ENCODE measurements at regions of chr14 and their contacts with region 1.

Region 1: GRCh38 chr14:22380571-22381407 is 208.2 kb downstream of the DAD1 start:
- DNase-seq: no peak
- H3K4me3 ChIP-seq: peak overlapping the region in 1 of 2 donors; percentile 18
- H3K27ac ChIP-seq: peak overlapping the region; percentile 72 to 84
- H3K4me1 ChIP-seq: peaks cover 4 to 12% of the 10 kb centered on the region in 2 donors
- H3K27me3 ChIP-seq: no peaks in the 10 kb centered on the region
- CTCF ChIP-seq: no peak

Region 2: DNA sequence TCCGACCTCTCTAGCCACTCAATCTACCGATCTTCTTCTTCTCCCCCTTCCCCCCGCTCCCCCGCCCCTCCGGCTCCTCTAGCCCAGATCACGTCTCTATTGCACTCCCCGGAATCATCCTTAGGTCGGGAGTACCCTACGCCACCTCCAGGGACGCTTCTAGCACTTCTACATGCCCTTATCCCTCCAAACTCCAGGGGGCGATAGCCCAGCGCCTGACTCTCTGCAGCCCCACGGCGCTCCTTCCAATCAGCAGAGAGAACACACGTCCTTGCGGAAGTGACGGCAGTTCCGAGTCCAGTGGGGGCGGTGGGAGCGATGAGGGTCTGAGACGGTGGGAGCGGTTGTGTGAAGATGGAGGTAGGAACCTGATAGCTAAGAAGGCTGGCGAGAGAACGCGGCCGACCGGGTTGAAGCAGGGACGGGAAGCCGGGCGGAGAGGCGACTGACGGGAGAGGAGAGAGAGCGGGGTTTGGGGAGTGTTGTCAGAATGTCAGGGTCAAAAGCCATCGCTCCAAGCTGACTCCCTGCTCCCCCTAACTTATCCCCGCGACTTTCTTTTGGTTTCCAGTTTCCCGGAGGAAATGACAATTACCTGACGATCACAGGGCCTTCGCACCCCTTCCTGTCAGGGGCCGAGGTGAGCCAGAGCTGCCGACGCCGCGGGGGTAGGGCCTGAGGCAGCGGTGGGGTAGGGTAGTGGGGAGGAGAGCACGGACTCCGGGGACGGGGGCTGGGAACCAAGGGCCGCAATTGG is 903.7 kb before region 1 on chr14 and contains the starts of genes RAB2B and TOX4:
- intact Hi-C with region 1: no loop called
- DNase-seq: peak; percentile 90 to 99
- H3K4me3 ChIP-seq: peak within 1 kb of the TSS; percentile 80 to 86
- H3K27ac ChIP-seq: peak within 1 kb of the TSS; percentile 85 to 90
- H3K4me1 ChIP-seq: peaks cover 4 to 16% of the 10 kb centered on the region in 2 donors
- H3K27me3 ChIP-seq: no peaks in the 10 kb centered on the region
- CTCF ChIP-seq: peak; percentile 97 to 98 (median 98)
- total RNA-seq, gene RAB2B: 19.2 TPM
- total RNA-seq, gene TOX4: 76.7 TPM

Region 3: DNA sequence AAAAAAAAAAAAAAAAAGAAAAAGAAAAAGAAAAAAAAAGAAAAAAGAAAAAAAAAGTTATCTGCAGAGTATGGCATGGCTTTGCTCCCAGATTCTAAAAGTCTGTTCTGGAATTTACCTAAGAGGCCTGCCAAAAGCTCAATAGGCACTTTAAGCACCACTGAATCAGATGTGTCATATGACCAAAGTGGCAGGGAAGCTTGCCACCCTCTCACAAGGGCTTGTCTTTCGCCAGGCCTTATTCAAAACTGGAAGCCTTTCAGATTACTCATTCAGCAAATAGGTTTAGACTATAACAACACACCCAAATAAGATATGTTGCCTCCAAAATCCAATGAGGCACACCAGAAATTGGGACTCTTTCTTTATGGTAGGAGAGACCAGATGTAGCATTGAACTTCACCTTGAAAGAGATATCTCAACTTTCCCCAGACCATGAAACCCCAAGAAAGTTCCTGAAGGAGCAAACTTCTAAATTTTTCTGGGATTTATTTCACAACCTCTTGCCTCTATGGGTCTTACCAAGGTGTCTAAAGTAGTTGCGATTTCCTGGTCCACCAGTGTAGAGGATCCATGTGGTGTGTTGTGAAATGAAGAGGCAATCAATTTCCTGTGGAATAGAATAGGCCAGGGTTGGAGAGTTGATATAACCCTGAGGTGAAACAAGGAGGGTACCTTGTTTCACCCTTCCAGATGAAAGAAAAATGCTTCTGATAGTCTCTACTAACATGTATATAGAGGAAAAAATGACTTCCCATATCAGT is 10.5 kb before region 1 on chr14:
- intact Hi-C with region 1: loop called (anchors 1 kb)
- DNase-seq: peak; percentile 34 to 88
- H3K4me3 ChIP-seq: no peak overlapping the region
- H3K27ac ChIP-seq: peak overlapping the region; percentile 46 to 72
- H3K4me1 ChIP-seq: peaks cover 0 to 16% of the 10 kb centered on the region in 2 donors
- H3K27me3 ChIP-seq: no peaks in the 10 kb centered on the region
- CTCF ChIP-seq: no peak

Region 4: DNA sequence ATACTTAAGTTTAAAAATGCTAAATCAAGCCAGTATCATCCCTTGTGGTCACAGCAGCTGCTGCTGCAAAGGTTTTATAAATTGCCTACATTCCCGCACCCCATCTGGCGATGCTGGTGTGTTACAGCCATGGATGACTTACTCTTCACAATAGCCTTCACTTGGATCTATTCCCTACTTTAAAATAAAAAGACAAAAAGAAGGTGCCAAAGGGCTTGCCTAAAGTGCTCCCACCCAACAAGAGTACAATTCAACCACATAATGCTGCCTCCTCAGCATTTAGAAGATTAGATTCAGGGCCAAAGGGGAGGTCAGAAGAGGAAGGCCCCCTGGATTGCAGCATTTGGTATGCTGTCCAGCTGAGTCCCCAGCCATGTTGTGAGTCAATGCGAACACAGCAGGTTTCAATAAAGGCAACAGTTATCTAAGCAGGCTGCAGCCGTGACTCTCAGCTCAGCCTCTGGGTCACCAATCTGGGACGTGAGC is 32.2 kb after region 1 on chr14:
- intact Hi-C with region 1: no loop called
- DNase-seq: no peak
- H3K4me3 ChIP-seq: no peak overlapping the region
- H3K27ac ChIP-seq: no peak overlapping the region
- H3K4me1 ChIP-seq: no peaks in the 10 kb centered on the region
- H3K27me3 ChIP-seq: no peaks in the 10 kb centered on the region
- CTCF ChIP-seq: no peak